ENCODE measurements at regions of chr1 and their contacts with region 1.

Region 1: DNA sequence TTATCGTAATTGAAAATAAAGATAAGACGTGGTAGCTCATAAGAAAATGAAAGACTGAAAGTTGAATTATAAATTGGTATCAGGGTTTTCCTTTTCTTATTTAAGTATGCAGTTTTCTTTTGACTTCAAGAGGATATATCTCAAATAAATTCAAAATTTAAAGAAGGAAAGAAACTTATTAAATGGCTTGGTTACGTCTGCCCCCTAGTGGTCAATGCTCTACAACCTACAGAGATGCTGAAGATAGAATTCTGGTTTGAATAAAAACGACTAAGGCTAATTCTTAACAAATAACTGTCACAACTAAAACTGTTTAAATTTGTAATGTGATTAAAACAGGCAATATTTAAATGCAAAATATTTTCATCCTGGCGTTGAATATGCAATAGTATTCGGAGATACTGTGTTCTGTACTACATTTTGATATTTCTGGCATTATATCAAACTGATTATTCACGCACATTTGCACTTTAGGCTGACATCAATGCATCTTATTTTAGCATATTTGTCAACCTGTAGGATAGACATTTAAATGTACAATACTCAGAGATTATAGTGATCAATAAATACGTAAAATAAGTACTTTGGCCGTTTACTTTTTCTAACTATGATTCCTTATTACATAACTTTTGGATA is 26.8 kb downstream of the IFI44 start:
- DNase-seq: peak; percentile 77
- ATAC-seq: peak; percentile 34
- H3K4me3 Mint-ChIP-seq: no peak overlapping the region
- H3K27ac Mint-ChIP-seq: no peak overlapping the region
- H3K4me1 Mint-ChIP-seq: peaks cover 4% of the 10 kb centered on the region
- H3K27me3 Mint-ChIP-seq: peaks cover 4% of the 10 kb centered on the region
- CTCF ChIP-seq: peak; percentile 83

Region 2: GRCh38 chr1:78145105-78145580 is 531.3 kb before region 1 on chr1:
- CTCF ChIA-PET with region 1: interaction called, 9 read pairs
- POLR2A ChIA-PET with region 1: no interaction called
- intact Hi-C with region 1: loop called (anchors 10 kb)
- DNase-seq: peak; percentile 62
- ATAC-seq: peak; percentile 81
- H3K4me3 Mint-ChIP-seq: no peak overlapping the region
- H3K27ac Mint-ChIP-seq: no peak overlapping the region
- H3K4me1 Mint-ChIP-seq: peaks cover 17% of the 10 kb centered on the region
- H3K27me3 Mint-ChIP-seq: peaks cover 4% of the 10 kb centered on the region
- CTCF ChIP-seq: peak; percentile 87

Region 3: GRCh38 chr1:78519446-78519845 is 157.0 kb before region 1 on chr1:
- CTCF ChIA-PET with region 1: no interaction called
- POLR2A ChIA-PET with region 1: no interaction called
- intact Hi-C with region 1: no loop called
- DNase-seq: no peak
- ATAC-seq: no peak
- H3K4me3 Mint-ChIP-seq: no peak overlapping the region
- H3K27ac Mint-ChIP-seq: no peak overlapping the region
- H3K4me1 Mint-ChIP-seq: no peaks in the 10 kb centered on the region
- H3K27me3 Mint-ChIP-seq: no peaks in the 10 kb centered on the region
- CTCF ChIP-seq: no peak

Region 4: GRCh38 chr1:78664763-78665162 is 11.7 kb before region 1 on chr1:
- CTCF ChIA-PET with region 1: interaction called, 11 read pairs
- POLR2A ChIA-PET with region 1: no interaction called
- intact Hi-C with region 1: no loop called
- DNase-seq: no peak
- ATAC-seq: peak; percentile 76
- H3K4me3 Mint-ChIP-seq: no peak overlapping the region
- H3K27ac Mint-ChIP-seq: no peak overlapping the region
- H3K4me1 Mint-ChIP-seq: no peaks in the 10 kb centered on the region
- H3K27me3 Mint-ChIP-seq: no peaks in the 10 kb centered on the region
- CTCF ChIP-seq: no peak

Region 5: DNA sequence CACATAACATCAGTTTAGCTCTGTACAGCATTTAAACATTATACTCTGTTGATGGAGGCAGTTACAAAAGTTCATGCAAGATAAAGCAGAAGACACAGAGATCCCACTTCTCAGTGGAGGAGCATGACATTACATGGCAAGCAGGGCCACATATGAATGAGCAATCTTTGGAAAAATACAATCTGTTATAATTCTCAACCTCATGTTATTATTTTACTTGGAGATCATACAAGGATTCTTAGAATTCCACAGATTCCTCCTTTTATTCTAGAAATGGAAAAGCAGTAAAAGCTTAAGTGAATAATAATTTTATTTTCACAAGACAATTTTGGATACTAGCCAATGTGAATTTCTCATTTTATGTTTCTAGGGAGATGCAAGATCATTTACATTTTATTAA is 39.7 kb after region 1 on chr1:
- CTCF ChIA-PET with region 1: no interaction called
- POLR2A ChIA-PET with region 1: no interaction called
- intact Hi-C with region 1: no loop called
- DNase-seq: no peak
- ATAC-seq: no peak
- H3K4me3 Mint-ChIP-seq: no peak overlapping the region
- H3K27ac Mint-ChIP-seq: no peak overlapping the region
- H3K4me1 Mint-ChIP-seq: no peaks in the 10 kb centered on the region
- H3K27me3 Mint-ChIP-seq: peaks cover 4% of the 10 kb centered on the region
- CTCF ChIP-seq: no peak

Measured in activated CD8-positive, alpha-beta T cell treated with anti-CD3 and anti-CD28 coated beads for 36 hours (primary cell).